ENCODE measurements at regions of chr13 and their contacts with region 1.

Region 1: GRCh38 chr13:103188713-103189326 is 122.6 kb upstream of the SLC10A2 start:
- DNase-seq: peak in 1 of 2 experiments; percentile 46
- H3K4me3 ChIP-seq: no peak overlapping the region
- H3K27ac ChIP-seq: no peak overlapping the region
- H3K4me1 ChIP-seq: no peaks in the 10 kb centered on the region
- H3K27me3 ChIP-seq: no peaks in the 10 kb centered on the region
- CTCF ChIP-seq: peak; percentile 85

Region 2: DNA sequence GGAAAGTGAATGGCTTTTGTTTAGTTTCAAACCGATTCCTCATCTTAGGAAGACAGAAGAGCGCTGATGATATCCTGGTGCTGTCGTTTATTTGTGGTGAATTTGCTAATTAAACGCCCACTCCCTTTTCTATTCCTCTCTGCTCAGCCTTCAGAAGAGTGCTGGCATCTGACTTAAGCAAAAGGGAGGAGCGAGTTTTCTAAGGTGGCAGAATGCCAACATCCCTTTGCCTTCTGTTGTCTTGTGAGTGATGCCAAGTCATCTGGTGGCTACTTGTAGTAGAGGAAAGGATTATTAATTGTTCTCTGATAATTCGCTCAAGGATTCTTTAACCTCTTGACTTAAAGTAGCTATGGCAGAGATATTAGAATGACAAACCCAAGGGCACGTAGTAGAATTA is 274.9 kb before region 1 on chr13:
- CTCF ChIA-PET with region 1: no interaction called
- POLR2A ChIA-PET with region 1: no interaction called
- intact Hi-C with region 1: loop called (anchors 5 kb)
- DNase-seq: peak in 1 of 2 experiments; percentile 6
- H3K4me3 ChIP-seq: no peak overlapping the region
- H3K27ac ChIP-seq: no peak overlapping the region
- H3K4me1 ChIP-seq: peaks cover 50% of the 10 kb centered on the region
- H3K27me3 ChIP-seq: no peaks in the 10 kb centered on the region
- CTCF ChIP-seq: no peak

Region 3: GRCh38 chr13:103218253-103218652 is 29.4 kb after region 1 on chr13:
- CTCF ChIA-PET with region 1: no interaction called
- POLR2A ChIA-PET with region 1: interaction called, 43 read pairs
- intact Hi-C with region 1: no loop called
- DNase-seq: no peak
- H3K4me3 ChIP-seq: no peak overlapping the region
- H3K27ac ChIP-seq: no peak overlapping the region
- H3K4me1 ChIP-seq: no peaks in the 10 kb centered on the region
- H3K27me3 ChIP-seq: no peaks in the 10 kb centered on the region
- CTCF ChIP-seq: no peak

Region 4: DNA sequence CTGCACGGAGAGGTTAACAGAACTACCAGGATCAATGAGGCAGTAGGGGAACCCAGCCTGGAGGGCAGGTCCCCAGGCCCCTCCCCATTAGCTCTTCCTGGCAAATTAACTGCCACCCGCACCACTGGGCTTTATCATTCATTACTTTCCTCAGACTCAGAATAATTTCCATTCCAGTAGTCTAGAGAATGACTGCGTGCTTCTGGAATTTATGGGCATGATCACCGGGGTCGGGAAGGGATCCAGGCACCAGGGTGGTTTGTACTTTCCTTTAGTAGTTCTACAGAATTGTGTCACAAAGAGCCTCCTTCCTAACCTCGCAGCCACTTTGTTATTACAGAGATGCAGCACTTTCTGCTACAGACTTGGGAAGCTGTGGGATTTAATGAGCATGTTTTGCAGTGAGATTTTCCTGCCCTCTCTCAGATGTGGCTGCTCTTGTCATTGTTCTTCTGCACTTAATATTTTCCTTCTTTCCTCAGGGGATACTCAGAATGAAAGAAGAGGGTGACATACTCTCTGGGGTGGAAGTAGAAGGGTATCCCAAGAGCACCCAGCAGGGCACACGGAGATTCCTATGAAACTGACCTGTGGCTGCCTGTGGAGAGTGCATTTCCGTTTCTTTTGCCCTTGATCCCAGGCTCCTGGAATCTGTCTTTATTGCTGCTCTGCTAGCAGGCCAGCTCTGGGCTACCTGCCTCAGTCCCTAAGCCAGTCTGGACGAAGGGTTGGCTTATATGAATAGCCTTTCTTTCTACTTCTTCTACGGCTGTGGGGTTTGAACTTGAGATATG is 162.4 kb after region 1 on chr13:
- CTCF ChIA-PET with region 1: no interaction called
- POLR2A ChIA-PET with region 1: no interaction called
- intact Hi-C with region 1: no loop called
- DNase-seq: peak in 1 of 2 experiments; percentile 7
- H3K4me3 ChIP-seq: no peak overlapping the region
- H3K27ac ChIP-seq: no peak overlapping the region
- H3K4me1 ChIP-seq: 0 out of 2 replicates have a peak, but pooled peaks cover 6% of the 10 kb centered on the region
- H3K27me3 ChIP-seq: no peaks in the 10 kb centered on the region
- CTCF ChIP-seq: no peak

Region 5: GRCh38 chr13:103883164-103883563 is 694.3 kb after region 1 on chr13:
- CTCF ChIA-PET with region 1: no interaction called
- POLR2A ChIA-PET with region 1: no interaction called
- intact Hi-C with region 1: loop called (anchors 5 kb)
- DNase-seq: peak; percentile 91 to 98
- H3K4me3 ChIP-seq: no peak overlapping the region
- H3K27ac ChIP-seq: 0 out of 2 replicates have a peak overlapping the region, but pooled peaks have one; percentile 29
- H3K4me1 ChIP-seq: peaks cover 7% of the 10 kb centered on the region
- H3K27me3 ChIP-seq: no peaks in the 10 kb centered on the region
- CTCF ChIP-seq: peak; percentile 77

Region 6: GRCh38 chr13:104773775-104774174 is 1585.0 kb after region 1 on chr13:
- CTCF ChIA-PET with region 1: no interaction called
- POLR2A ChIA-PET with region 1: no interaction called
- intact Hi-C with region 1: loop called (anchors 2 kb)
- DNase-seq: peak in 1 of 2 experiments; percentile 45
- H3K4me3 ChIP-seq: no peak overlapping the region
- H3K27ac ChIP-seq: no peak overlapping the region
- H3K4me1 ChIP-seq: no peaks in the 10 kb centered on the region
- H3K27me3 ChIP-seq: no peaks in the 10 kb centered on the region
- CTCF ChIP-seq: peak; percentile 76

Measured in PC-9 (cell line).